ENCODE measurements at regions of chr15 and their contacts with region 1.

Region 1: DNA sequence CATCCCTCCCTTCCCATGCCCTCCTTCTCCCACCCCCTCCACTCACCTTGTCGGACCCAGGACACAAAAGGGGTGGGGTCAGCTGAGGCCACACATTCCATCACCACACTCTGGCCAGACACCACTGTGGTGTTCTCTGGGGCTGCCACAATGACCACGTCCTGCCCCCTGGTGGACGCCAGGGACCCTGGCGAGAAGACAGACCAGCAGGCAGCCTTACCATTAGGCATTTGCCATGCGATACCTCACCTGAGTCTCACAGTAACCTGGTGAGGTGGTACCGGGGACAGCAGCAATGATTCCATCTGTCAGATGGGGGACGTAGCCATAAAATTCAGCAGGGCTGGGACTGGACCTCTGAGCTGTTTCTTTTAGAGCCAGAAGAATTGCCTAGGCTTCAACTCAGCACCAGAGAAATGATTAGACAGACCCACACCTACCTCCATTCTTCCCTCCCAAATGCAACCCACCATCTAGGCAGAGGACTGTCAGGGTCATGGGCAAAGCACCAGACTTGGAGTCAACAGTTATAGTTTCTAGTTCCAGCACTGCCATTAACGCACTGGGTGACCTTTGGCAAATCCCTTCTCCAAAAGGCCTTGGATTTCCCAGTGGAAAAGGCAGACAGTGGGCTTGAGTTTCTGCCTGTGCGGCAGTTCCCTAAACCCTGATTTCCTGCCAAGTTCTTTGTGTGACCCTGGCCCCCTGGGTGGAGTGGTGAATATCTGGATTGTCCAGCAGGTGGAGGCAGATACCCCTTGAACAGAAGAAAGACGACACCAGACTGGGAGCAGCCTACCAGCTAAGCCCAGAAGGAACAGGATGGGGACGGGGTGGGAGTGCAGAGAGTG is 21.8 kb downstream of the IGDCC4 start:
- DNase-seq: peak; percentile 59
- H3K4me3 Mint-ChIP-seq: no peak overlapping the region
- H3K27ac Mint-ChIP-seq: no peak overlapping the region
- H3K4me1 Mint-ChIP-seq: no peaks in the 10 kb centered on the region
- H3K27me3 Mint-ChIP-seq: peaks cover 51% of the 10 kb centered on the region

Region 2: DNA sequence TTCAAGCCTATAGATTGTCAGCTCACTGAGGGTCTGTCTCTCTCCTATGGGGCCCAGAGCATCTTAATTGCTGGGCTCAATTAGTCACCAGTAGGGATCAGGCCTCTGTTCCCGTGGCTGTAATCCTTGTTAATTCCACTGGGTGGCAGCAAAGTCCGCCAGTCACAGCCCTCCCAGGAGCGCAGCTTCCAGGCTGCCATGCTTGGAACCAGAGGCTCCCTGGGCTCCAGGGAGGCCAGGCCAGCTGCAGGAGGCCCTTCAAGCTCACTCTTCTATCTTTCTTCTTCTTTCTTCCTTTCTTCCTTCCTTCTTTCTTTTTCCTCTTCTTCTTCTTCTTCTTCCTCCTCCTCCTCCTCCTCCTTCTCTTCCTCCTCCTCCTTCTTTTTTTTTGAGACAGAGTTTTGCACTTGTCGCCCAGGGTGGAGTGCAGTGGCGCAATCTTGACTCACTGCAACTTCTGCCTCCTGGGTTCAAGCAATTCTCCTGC is 82.1 kb before region 1 on chr15:
- CTCF ChIA-PET with region 1: interaction called, 15 read pairs
- POLR2A ChIA-PET with region 1: no interaction called
- DNase-seq: peak; percentile 79
- H3K4me3 Mint-ChIP-seq: no peak overlapping the region
- H3K27ac Mint-ChIP-seq: no peak overlapping the region
- H3K4me1 Mint-ChIP-seq: no peaks in the 10 kb centered on the region
- H3K27me3 Mint-ChIP-seq: peaks cover 17% of the 10 kb centered on the region

Region 3: GRCh38 chr15:65377104-65377975 is 23.6 kb before region 1 on chr15:
- CTCF ChIA-PET with region 1: interaction called, 10 read pairs
- POLR2A ChIA-PET with region 1: no interaction called
- DNase-seq: no peak
- H3K4me3 Mint-ChIP-seq: peak overlapping the region; percentile 8
- H3K27ac Mint-ChIP-seq: no peak overlapping the region
- H3K4me1 Mint-ChIP-seq: peaks cover 15% of the 10 kb centered on the region
- H3K27me3 Mint-ChIP-seq: peaks cover 72% of the 10 kb centered on the region

Region 4: DNA sequence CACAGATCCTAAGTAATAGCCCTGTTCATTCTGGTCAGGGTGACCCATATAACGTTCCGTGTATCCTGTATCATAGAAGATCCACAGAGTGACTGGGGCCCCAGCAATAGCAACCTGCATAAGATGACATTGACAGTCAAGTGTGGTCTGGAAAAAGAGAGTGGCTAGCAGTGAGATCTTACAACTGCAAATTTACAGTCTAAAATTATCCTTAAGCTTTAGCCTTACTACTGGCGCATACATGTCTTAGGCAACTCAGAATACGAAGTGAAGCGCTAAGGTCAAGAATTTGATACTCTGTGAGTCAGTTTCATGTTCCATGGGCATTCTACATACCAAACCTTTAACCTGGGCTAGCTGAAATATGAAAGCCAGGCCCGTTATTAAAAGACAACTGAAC is 51.0 kb after region 1 on chr15:
- CTCF ChIA-PET with region 1: no interaction called
- POLR2A ChIA-PET with region 1: no interaction called
- DNase-seq: no peak
- H3K4me3 Mint-ChIP-seq: no peak overlapping the region
- H3K27ac Mint-ChIP-seq: no peak overlapping the region
- H3K4me1 Mint-ChIP-seq: no peaks in the 10 kb centered on the region
- H3K27me3 Mint-ChIP-seq: no peaks in the 10 kb centered on the region

Measured in activated CD4-positive, alpha-beta memory T cell treated with anti-CD3 and anti-CD28 coated beads, Interleukin-2, amount 10 ng/mL, durations not matched to agents 7 days and 5 days (primary cell).